Posterior vena cava (tissue), 2 donors: ENCODE measurements at regions of chr2 and their contacts with region 1.

Region 1: DNA sequence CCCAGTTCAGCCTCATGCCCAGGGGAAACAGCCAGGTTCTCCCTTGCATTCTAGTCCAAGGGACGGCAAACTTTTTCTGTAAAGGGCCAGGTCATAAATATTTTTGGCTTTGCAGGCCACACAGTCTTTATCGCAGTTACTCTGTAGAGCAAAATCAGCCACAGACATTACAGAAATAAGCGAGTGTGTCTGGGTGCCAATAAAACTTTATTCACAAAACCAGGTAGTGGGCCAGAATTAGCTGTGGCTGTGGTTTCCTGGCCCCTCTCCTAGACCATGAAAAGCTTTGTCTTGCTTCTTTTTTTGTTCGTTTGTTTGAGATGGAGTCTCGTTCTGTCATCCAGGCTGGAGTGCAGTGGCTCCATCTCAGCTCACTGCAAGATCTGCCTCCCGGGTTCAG is 80.1 kb downstream of the EIPR1 start:
- DNase-seq: no peak

Region 2: GRCh38 chr2:1625208-1625937 is 1672.2 kb before region 1 on chr2:
- intact Hi-C with region 1: no loop called
- DNase-seq: peak; percentile 78

Region 3: DNA sequence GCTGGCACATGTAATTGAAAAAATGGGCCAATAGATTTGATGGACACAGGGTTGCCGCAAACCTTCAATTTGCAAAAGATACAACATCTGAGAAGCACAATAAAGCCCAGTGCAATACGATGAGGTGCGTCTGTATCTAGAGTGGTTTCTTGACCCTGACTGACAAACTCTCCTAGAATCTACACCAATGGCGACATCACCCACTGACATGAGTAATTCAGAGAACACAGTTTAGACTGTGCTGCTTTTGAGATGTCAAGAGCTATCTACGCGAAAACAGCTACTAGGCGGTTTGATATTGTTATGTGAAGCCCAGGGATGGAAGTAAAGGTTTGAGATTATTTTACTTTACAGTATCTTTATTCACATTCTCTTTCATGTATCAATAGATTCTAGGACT is 24.8 kb before region 1 on chr2:
- intact Hi-C with region 1: loop called in 1 of 2 experiments (anchors 1 kb)
- DNase-seq: no peak

Region 4: DNA sequence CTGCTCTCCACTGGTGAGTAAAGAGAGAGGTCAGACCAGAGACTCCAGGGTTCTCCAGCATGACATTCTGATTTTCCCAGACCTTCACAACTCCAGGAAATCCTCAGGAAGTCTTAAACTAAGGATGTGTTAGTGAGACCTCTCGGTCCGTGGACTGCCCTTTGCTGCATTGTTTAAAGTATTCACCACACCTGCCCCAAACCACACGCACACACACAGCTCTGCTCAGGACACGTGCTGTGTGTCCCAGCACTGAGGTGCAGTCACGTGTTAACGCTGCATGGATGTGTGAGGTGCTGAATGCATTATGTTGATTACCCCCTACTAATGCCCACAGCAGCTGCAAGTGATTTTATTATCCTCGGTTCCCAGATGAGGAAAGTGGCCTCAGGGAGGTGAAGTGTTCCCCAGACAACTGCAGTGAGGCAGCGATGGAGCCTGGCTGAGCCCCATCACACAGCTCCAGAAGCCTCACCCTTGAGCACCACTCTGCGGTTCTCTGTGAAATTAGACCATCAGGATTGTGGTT is 150.3 kb after region 1 on chr2:
- intact Hi-C with region 1: no loop called
- DNase-seq: no peak